ENCODE measurements at regions of chr11 and their contacts with region 1.

Region 1: GRCh38 chr11:62542750-62543567 is 3.6 kb downstream of the AHNAK start:
- DNase-seq: peak; percentile 92
- ATAC-seq: peak; percentile 19
- H3K4me3 ChIP-seq: peak overlapping the region; percentile 96
- H3K27ac ChIP-seq: peak overlapping the region; percentile 94
- H3K4me1 ChIP-seq: peaks cover 72% of the 10 kb centered on the region
- H3K27me3 ChIP-seq: no peaks in the 10 kb centered on the region
- CTCF ChIP-seq: peak; percentile 98

Region 2: DNA sequence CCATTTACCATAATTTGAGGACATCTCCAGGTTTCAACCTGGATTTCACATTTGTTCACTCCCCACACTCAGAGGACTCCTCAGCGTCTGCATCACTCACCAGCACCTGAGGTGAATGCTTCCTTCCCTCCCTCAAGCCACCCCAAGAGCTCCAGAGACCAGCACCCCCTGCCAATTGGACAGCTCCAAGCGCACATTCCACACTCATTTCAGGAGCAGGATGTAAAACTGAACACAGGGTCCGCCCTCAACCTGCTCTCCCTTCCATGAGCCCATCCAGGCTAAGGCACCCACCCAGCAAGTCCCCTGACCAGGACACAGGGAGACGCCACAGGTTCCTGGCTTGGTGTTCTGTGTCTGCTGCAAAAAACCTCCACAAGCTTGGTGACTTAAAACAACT is 349.0 kb before region 1 on chr11:
- CTCF ChIA-PET with region 1: no interaction called
- POLR2A ChIA-PET with region 1: no interaction called
- intact Hi-C with region 1: no loop called
- DNase-seq: peak; percentile 32
- ATAC-seq: no peak
- H3K4me3 ChIP-seq: no peak overlapping the region
- H3K27ac ChIP-seq: no peak overlapping the region
- H3K4me1 ChIP-seq: no peaks in the 10 kb centered on the region
- H3K27me3 ChIP-seq: peaks cover 79% of the 10 kb centered on the region
- CTCF ChIP-seq: no peak

Region 3: GRCh38 chr11:62394825-62395538 is 148.0 kb before region 1 on chr11:
- CTCF ChIA-PET with region 1: interaction called, 34 read pairs
- POLR2A ChIA-PET with region 1: interaction called, 5 read pairs
- intact Hi-C with region 1: loop called (anchors 1 kb)
- DNase-seq: peak; percentile 93
- ATAC-seq: peak; percentile 81
- H3K4me3 ChIP-seq: peak overlapping the region; percentile 64
- H3K27ac ChIP-seq: no peak overlapping the region
- H3K4me1 ChIP-seq: peaks cover 17% of the 10 kb centered on the region
- H3K27me3 ChIP-seq: no peaks in the 10 kb centered on the region
- CTCF ChIP-seq: peak; percentile 96

Region 4: GRCh38 chr11:62427630-62428233 is 115.2 kb before region 1 on chr11:
- CTCF ChIA-PET with region 1: interaction called, 64 read pairs
- POLR2A ChIA-PET with region 1: interaction called, 3 read pairs
- intact Hi-C with region 1: loop called (anchors 1 kb)
- DNase-seq: peak; percentile 35
- ATAC-seq: no peak
- H3K4me3 ChIP-seq: no peak overlapping the region
- H3K27ac ChIP-seq: peak overlapping the region; percentile 35
- H3K4me1 ChIP-seq: peaks cover 41% of the 10 kb centered on the region
- H3K27me3 ChIP-seq: no peaks in the 10 kb centered on the region
- CTCF ChIP-seq: no peak

Region 5: GRCh38 chr11:62497132-62497915 is 45.6 kb before region 1 on chr11:
- CTCF ChIA-PET with region 1: interaction called, 20 read pairs
- POLR2A ChIA-PET with region 1: no interaction called
- intact Hi-C with region 1: loop called (anchors 1 kb)
- DNase-seq: peak; percentile 87
- ATAC-seq: peak; percentile 85
- H3K4me3 ChIP-seq: no peak overlapping the region
- H3K27ac ChIP-seq: peak overlapping the region; percentile 26
- H3K4me1 ChIP-seq: peaks cover 34% of the 10 kb centered on the region
- H3K27me3 ChIP-seq: no peaks in the 10 kb centered on the region
- CTCF ChIP-seq: peak; percentile 93